Activated T-helper 2 cell treated with anti-CD3 and anti-CD28 coated beads, Interferon-gamma antibody, Interleukin-2, Interleukin-4, amounts not matched to agents 10 μg/mL and 5 μg/mL and 100 μg/mL, durations not matched to agents 14 hours and 24 hours and 36 hours (primary cell): ENCODE measurements at regions of chr3 and their contacts with region 1.

Region 1: GRCh38 chr3:100796556-100796955 is 87.3 kb downstream of the TFG start:
- DNase-seq: no peak
- H3K4me3 Mint-ChIP-seq: no peak overlapping the region
- H3K27ac Mint-ChIP-seq: no peak overlapping the region
- H3K4me1 Mint-ChIP-seq: peaks cover 6% of the 10 kb centered on the region
- H3K27me3 Mint-ChIP-seq: peaks cover 15% of the 10 kb centered on the region

Region 2: GRCh38 chr3:100650651-100651611 is 145.6 kb before region 1 on chr3:
- intact Hi-C with region 1: loop called (anchors 5 kb)
- DNase-seq: no peak
- H3K4me3 Mint-ChIP-seq: peak overlapping the region; percentile 5
- H3K27ac Mint-ChIP-seq: peak overlapping the region; percentile 38
- H3K4me1 Mint-ChIP-seq: peaks cover 14% of the 10 kb centered on the region
- H3K27me3 Mint-ChIP-seq: peaks cover 2% of the 10 kb centered on the region

Region 3: GRCh38 chr3:100737334-100737733 is 59.2 kb before region 1 on chr3:
- intact Hi-C with region 1: loop called (anchors 5 kb)
- DNase-seq: no peak
- H3K4me3 Mint-ChIP-seq: no peak overlapping the region
- H3K27ac Mint-ChIP-seq: peak overlapping the region; percentile 33
- H3K4me1 Mint-ChIP-seq: peaks cover 41% of the 10 kb centered on the region
- H3K27me3 Mint-ChIP-seq: no peaks in the 10 kb centered on the region

Region 4: DNA sequence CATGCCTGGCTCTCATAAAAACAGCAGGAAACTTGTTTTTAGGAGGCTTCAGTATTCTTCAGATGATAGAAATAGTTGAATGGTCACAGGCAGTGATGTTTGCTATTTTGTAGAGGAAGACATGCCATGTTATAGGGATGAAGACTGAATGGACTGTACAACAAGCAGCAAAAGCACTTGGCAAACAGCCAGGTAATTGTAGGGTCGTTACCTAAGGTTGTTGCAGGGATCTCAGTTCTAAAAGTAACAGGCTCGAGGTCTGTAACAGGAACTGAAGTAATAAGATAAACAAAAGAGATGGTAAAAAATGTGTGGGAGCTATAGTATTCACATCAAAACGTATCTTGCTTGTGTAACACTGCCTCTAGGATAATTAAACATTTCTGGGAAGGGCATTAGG is 29.0 kb after region 1 on chr3:
- intact Hi-C with region 1: no loop called
- DNase-seq: no peak
- H3K4me3 Mint-ChIP-seq: no peak overlapping the region
- H3K27ac Mint-ChIP-seq: no peak overlapping the region
- H3K4me1 Mint-ChIP-seq: no peaks in the 10 kb centered on the region
- H3K27me3 Mint-ChIP-seq: peaks cover 3% of the 10 kb centered on the region